PC-3 (cell line): ENCODE measurements at regions of chr6 and their contacts with region 1.

Region 1: DNA sequence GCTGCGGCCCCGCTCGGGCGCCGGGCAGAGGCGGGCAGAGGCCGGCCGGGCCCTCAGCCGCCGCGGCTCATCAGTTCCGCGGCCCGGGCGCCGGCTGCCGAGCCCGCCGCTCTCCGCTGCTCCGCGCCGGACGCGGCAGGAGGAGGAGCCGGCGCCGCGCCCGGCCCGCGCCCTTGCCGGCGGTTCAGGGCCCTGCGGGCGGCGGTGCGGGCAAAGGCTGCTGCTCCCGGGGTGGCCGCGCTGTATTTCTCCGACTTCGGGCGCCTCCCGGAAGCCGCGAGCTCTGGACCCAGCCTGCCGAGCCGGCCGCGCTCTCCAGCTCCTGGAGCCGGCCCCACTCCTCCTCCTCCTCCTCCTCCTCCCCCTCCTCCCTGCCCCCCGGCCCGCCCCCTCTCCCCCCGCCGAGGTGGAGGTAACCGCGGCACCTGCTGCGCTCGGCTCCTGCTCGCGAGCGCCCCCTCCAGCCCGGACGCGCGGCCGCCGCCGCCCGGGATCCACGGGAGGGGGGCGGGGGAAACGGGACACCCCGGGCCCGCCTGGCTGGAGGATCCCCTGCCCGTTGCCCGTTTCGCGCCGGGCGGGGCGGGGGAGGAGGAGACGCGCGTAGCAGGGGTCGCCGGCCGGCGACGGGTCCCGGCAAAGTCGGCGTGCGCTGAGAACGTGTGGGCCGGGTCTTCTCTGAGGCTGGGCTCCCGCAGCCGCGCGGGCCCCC is at the start of gene SLC22A23:
- DNase-seq: peak; percentile 84
- ATAC-seq: peak; percentile 53
- H3K4me3 ChIP-seq: peak within 1 kb of the TSS; percentile 89
- H3K27ac ChIP-seq: no peak within 1 kb of the TSS
- H3K4me1 ChIP-seq: peaks cover 18% of the 10 kb centered on the region
- H3K27me3 ChIP-seq: no peaks in the 10 kb centered on the region
- CTCF ChIP-seq: peak; percentile 52
- total RNA-seq, gene SLC22A23: 5.7 and 8.2 TPM in 2 replicates

Region 2: DNA sequence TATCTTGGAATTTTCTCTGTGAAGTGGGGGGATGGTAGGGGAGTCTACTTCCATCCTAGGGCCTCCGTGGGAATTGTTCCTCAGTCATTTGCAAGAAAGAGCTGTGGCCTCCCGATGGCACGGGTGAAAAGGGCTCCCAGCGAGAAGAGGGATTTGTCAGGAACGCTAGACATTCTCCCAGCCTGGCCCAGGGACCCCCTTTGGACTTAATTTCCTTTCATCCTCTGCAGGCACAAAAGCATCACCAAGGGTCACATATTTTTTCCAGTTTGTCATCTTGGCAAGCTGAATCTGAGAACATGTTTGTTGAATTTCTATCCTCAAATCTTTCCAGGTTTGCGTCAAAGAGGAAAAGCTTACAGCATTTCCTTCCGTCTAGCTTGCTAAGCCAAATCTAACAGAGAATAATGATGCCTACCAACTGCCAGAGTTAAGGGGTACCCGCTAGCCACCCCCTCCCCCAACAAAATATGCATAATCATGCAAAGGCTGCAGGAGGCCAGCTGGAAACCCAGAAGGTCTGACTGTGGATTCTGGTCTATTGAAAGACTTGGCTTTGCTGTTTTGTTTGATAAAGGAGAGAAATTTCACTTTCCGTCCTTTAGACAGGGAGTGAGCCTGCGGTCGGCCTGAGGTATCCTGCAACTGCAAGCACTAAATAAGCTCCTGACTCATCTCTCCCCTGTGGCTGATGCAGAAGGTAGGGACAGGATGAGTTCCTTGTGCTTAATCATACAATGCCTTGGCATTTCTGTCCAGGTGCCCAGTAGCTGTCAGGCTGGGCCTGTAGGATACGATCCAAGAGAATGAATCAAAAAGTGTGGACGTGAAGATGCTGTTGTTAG is 175.1 kb before region 1 on chr6:
- CTCF ChIA-PET with region 1: interaction called, 5 read pairs
- POLR2A ChIA-PET with region 1: no interaction called
- intact Hi-C with region 1: loop called (anchors 2 kb)
- DNase-seq: peak; percentile 97
- ATAC-seq: peak; percentile 97
- H3K4me3 ChIP-seq: peak overlapping the region; percentile 26; the same call in 1 of the 2 replicates
- H3K27ac ChIP-seq: peak overlapping the region; percentile 89
- H3K4me1 ChIP-seq: peaks cover 25% of the 10 kb centered on the region
- H3K27me3 ChIP-seq: no peaks in the 10 kb centered on the region
- CTCF ChIP-seq: no peak

Region 3: GRCh38 chr6:3356056-3356761 is 100.7 kb before region 1 on chr6:
- CTCF ChIA-PET with region 1: no interaction called
- POLR2A ChIA-PET with region 1: interaction called, 3 read pairs
- intact Hi-C with region 1: loop called (anchors 5 kb)
- DNase-seq: peak; percentile 57
- ATAC-seq: peak; percentile 57
- H3K4me3 ChIP-seq: peak overlapping the region; percentile 60
- H3K27ac ChIP-seq: peak overlapping the region; percentile 75
- H3K4me1 ChIP-seq: peaks cover 23% of the 10 kb centered on the region
- H3K27me3 ChIP-seq: no peaks in the 10 kb centered on the region
- CTCF ChIP-seq: no peak

Region 4: GRCh38 chr6:3438190-3439167 is 18.4 kb before region 1 on chr6:
- CTCF ChIA-PET with region 1: interaction called, 3 read pairs
- POLR2A ChIA-PET with region 1: no interaction called
- intact Hi-C with region 1: loop called (anchors 1 kb)
- DNase-seq: peak; percentile 88
- ATAC-seq: peak; percentile 97
- H3K4me3 ChIP-seq: no peak overlapping the region
- H3K27ac ChIP-seq: peak overlapping the region; percentile 78
- H3K4me1 ChIP-seq: peaks cover 32% of the 10 kb centered on the region
- H3K27me3 ChIP-seq: no peaks in the 10 kb centered on the region
- CTCF ChIP-seq: no peak

Region 5: GRCh38 chr6:3612341-3613041 is 155.6 kb after region 1 on chr6:
- CTCF ChIA-PET with region 1: no interaction called
- POLR2A ChIA-PET with region 1: no interaction called
- intact Hi-C with region 1: loop called (anchors 5 kb)
- DNase-seq: peak; percentile 98
- ATAC-seq: peak; percentile 85
- H3K4me3 ChIP-seq: peak overlapping the region; percentile 15; the same call in 1 of the 2 replicates
- H3K27ac ChIP-seq: peak overlapping the region; percentile 63
- H3K4me1 ChIP-seq: peaks cover 38% of the 10 kb centered on the region
- H3K27me3 ChIP-seq: no peaks in the 10 kb centered on the region
- CTCF ChIP-seq: no peak